Activated B cell treated with CpG ODN at 0.5 μM for 24 hours (primary cell): ENCODE measurements at regions of chr18 and their contacts with region 1.

Region 1: DNA sequence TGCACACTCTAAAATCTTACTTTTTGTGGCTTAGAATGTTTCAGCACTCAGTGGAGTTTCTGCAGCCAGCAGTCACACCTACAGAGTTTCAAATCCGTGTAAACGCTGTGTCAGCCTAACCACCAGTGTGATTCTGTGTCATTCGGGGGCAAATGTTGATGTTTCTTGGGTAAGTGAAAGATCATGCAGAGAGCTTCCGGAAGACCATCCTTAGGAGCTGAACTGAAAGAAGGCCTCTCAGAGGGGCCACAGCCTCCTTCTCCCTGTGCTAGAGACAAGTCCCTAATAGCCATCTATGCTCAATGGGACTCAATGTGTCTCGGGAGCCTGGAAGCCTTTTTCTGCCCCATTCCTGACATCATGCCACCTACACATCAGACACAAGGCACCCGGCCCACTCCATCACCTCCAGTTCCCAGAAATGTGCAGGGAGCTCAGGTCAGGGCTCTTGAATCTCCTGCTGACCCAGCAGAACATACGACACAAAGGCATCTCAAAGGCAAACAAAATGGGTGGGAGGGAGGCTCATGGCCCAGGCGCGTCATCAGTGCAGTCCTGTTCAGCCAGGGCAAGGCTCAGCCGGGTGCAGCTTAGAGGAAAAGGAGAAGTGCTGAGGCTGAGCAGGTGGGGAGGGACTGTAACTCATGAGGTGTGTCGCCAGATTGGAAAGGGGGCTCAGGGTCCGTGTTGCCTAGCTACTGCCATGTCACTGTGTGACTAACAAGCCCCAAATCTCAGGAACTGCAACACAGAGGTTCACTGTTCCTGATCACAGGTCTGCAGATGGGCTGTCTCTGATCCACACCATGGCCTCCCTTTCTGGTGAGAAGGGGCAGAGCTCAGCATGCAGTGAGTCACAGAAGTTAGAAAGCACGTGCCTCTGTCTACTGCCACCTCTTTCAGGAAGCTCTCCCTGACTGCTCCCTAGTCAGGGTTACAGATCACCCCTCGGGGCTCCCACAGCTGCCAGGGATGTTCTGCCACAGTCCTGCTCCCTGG is 82.0 kb downstream of the SMAD7 start:
- DNase-seq: peak; percentile 44
- ATAC-seq: peak; percentile 95
- H3K4me3 Mint-ChIP-seq: peak overlapping the region; percentile 13
- H3K27ac Mint-ChIP-seq: peak overlapping the region; percentile 85
- H3K4me1 Mint-ChIP-seq: peaks cover 17% of the 10 kb centered on the region
- H3K27me3 Mint-ChIP-seq: no peaks in the 10 kb centered on the region
- CTCF ChIP-seq: no peak

Region 2: GRCh38 chr18:48538531-48539405 is 330.0 kb before region 1 on chr18 and contains the start of gene CTIF:
- CTCF ChIA-PET with region 1: no interaction called
- POLR2A ChIA-PET with region 1: no interaction called
- intact Hi-C with region 1: no loop called
- DNase-seq: peak; percentile 49
- ATAC-seq: peak; percentile 81
- H3K4me3 Mint-ChIP-seq: peak within 1 kb of the TSS; percentile 91
- H3K27ac Mint-ChIP-seq: peak within 1 kb of the TSS; percentile 50
- H3K4me1 Mint-ChIP-seq: peaks cover 8% of the 10 kb centered on the region
- H3K27me3 Mint-ChIP-seq: no peaks in the 10 kb centered on the region
- CTCF ChIP-seq: no peak
- total RNA-seq, gene CTIF: 9.3 and 9.7 TPM in 2 replicates

Region 3: DNA sequence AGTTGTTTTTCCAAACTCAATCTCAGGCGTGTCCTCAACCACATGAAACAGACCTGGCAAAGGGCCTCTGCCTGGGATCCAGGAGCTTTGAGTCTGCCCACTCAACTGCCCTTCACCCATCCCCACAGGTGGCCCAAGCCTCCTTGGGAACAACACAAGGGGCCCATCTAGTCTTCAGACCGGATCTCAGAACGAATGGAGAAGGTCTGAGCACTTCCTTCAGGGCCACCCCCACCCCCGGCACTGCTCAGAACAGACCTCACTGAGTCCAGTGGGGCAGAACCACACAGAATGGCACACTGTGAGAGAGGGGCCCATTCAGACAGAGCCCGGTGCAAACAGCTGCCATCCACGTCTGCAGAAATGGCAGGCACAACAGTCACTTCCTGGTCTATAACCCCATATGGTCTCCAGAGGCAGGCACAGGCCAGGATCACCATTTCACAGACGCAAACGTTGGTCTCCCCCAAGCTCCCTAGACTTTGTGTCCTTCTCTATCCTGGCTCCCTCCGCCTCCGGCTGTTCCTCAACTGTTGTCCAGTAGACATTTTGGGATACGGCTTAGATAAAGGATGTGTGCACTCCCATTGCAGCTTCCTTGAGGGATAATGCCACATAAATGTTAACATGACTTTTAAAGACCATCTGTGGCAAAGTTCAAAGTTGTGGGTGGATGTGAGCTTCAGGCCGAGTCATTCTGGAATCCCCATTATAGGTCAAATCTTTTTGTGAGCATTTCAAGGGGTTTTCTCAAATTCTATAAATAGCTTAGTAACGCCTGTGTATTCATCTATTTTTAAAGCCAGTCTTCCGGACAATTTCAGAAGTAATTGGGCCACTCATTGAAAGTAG is 67.7 kb before region 1 on chr18:
- CTCF ChIA-PET with region 1: no interaction called
- POLR2A ChIA-PET with region 1: interaction called, 5 read pairs
- intact Hi-C with region 1: loop called (anchors 1 kb)
- DNase-seq: peak; percentile 20
- ATAC-seq: peak; percentile 85
- H3K4me3 Mint-ChIP-seq: peak overlapping the region; percentile 67
- H3K27ac Mint-ChIP-seq: peak overlapping the region; percentile 82
- H3K4me1 Mint-ChIP-seq: peaks cover 44% of the 10 kb centered on the region
- H3K27me3 Mint-ChIP-seq: no peaks in the 10 kb centered on the region
- CTCF ChIP-seq: no peak

Region 4: GRCh38 chr18:48820483-48821250 is 48.1 kb before region 1 on chr18:
- CTCF ChIA-PET with region 1: no interaction called
- POLR2A ChIA-PET with region 1: no interaction called
- intact Hi-C with region 1: loop called (anchors 2 kb)
- DNase-seq: peak; percentile 33
- ATAC-seq: peak; percentile 98
- H3K4me3 Mint-ChIP-seq: peak overlapping the region; percentile 4
- H3K27ac Mint-ChIP-seq: peak overlapping the region; percentile 32
- H3K4me1 Mint-ChIP-seq: peaks cover 18% of the 10 kb centered on the region
- H3K27me3 Mint-ChIP-seq: no peaks in the 10 kb centered on the region
- CTCF ChIP-seq: no peak

Region 5: DNA sequence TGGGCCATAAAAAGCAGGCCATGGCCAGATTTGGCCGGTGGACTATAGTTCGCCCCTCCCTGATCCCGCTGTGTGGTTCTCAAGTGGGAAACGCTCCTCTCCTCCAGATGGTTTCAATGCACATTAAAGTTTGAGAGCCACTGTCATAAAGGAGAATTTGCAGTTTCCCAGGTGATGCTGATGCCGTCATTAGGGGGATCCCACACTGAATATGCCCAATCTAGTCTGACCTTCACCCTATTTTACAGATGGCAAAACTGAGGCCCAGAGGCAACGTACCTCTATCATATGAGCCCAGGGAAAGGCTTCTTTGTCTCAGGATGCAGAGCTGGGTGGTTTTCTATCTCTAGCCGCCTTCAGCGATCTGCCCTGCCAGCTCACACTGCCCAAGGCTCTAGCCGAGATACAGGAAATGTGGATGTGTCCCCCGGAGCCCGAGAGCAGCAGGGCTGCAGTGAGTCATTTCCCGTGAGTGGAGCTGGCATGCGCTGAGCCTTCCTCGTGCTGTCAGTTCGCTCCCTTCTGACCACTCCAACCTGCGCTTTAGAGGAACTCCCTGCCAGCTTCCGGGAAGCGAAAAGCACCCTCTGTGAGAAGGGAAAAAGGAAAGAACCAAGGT is 34.2 kb before region 1 on chr18:
- CTCF ChIA-PET with region 1: no interaction called
- POLR2A ChIA-PET with region 1: no interaction called
- intact Hi-C with region 1: loop called (anchors 1 kb)
- DNase-seq: peak; percentile 42
- ATAC-seq: peak; percentile 83
- H3K4me3 Mint-ChIP-seq: peak overlapping the region; percentile 76
- H3K27ac Mint-ChIP-seq: peak overlapping the region; percentile 80
- H3K4me1 Mint-ChIP-seq: peaks cover 37% of the 10 kb centered on the region
- H3K27me3 Mint-ChIP-seq: no peaks in the 10 kb centered on the region
- CTCF ChIP-seq: no peak

Region 6: GRCh38 chr18:48992699-48993555 is 124.2 kb after region 1 on chr18:
- CTCF ChIA-PET with region 1: no interaction called
- POLR2A ChIA-PET with region 1: no interaction called
- intact Hi-C with region 1: loop called (anchors 2 kb)
- DNase-seq: peak; percentile 45
- ATAC-seq: peak; percentile 98
- H3K4me3 Mint-ChIP-seq: peak overlapping the region; percentile 42
- H3K27ac Mint-ChIP-seq: peak overlapping the region; percentile 70
- H3K4me1 Mint-ChIP-seq: peaks cover 20% of the 10 kb centered on the region
- H3K27me3 Mint-ChIP-seq: no peaks in the 10 kb centered on the region
- CTCF ChIP-seq: no peak